ENCODE measurements at regions of chr7 and their contacts with region 1.

Region 1: GRCh38 chr7:157339777-157340677 is 3.2 kb downstream of the DNAJB6 start:
- DNase-seq: peak; percentile 53
- ATAC-seq: peak; percentile 59
- H3K4me3 ChIP-seq: peak overlapping the region in 1 of 2 experiments; percentile 2; a peak in 1 of 4 replicates
- H3K27ac ChIP-seq: peak overlapping the region; percentile 17
- H3K4me1 ChIP-seq: peaks cover 17 to 57% of the 10 kb centered on the region in 2 experiments
- H3K27me3 ChIP-seq: no peaks in the 10 kb centered on the region
- CTCF ChIP-seq: peak; percentile 84 to 97 (median 90)
- POLR2A ChIP-seq: no peak
- RAD21 ChIP-seq: peak; percentile 84

Region 2: DNA sequence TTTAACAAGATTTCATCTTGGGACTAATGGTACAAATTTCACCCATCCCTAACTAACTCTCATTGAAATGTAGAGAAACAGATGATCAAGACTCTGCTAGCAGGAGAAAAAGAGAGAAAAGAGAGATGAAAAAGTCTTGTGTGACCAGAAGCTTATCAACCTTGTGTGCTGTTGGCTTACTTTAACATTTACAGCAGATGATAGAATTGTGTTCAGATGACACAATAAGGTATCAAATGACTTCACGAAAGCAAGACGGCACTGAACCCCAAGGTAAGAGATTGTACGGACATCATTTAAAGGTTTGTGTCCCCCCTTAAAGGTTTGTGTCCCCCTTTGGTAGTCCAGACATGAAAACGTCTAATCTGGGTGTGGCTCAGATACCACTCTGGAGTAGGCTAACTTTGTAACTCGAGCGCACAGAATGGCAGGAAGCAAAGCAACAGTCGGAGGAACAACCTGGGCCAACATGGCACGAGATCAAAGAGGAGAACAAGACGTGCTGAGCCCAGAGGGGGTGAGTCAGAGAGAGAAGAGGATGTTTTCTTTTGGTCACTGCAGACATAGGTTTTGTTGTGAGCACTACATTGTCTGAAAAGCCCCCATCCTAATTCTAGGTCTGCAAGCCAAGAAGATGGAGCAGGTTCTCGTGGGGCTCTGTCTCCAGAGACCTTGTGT is 436.7 kb before region 1 on chr7:
- CTCF ChIA-PET with region 1: no interaction called
- POLR2A ChIA-PET with region 1: no interaction called
- RAD21 ChIA-PET with region 1: no interaction called
- intact Hi-C with region 1: loop called (anchors 10 kb)
- DNase-seq: peak; percentile 89
- ATAC-seq: peak; percentile 91
- H3K4me3 ChIP-seq: peak overlapping the region; percentile 8 to 45
- H3K27ac ChIP-seq: peak overlapping the region; percentile 54
- H3K4me1 ChIP-seq: peaks cover 30 to 61% of the 10 kb centered on the region in 2 experiments
- H3K27me3 ChIP-seq: no peaks in the 10 kb centered on the region
- CTCF ChIP-seq: no peak
- POLR2A ChIP-seq: no peak
- RAD21 ChIP-seq: no peak

Region 3: DNA sequence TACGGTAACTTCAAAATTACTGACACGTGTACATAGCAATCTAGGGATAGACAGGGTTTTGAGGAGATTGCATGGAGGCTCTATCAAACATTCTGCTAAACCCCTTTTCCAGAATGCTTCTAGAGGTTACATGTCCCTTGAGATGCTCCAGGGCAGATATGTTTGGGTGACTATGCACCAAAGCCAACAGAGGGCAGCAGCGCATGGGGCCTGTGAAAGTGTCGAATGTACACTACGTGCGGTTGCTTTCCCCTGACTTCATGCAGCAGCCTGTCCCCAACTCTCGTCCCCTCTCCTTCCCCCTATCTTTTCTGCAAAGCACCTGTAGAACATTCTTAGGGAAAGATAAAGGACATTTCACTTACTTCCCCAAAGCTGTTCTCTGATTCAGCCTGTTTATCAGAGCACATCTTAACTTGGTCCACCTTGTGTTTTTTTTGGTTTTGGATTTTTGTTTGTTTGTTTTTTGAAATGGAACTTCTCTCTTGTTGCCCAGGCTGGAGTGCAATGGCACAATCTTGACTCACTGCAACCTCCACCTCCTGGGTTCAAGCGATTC is 111.1 kb before region 1 on chr7:
- CTCF ChIA-PET with region 1: no interaction called
- POLR2A ChIA-PET with region 1: no interaction called
- RAD21 ChIA-PET with region 1: no interaction called
- intact Hi-C with region 1: loop called (anchors 1 kb)
- DNase-seq: no peak
- ATAC-seq: peak; percentile 89
- H3K4me3 ChIP-seq: no peak overlapping the region
- H3K27ac ChIP-seq: no peak overlapping the region
- H3K4me1 ChIP-seq: no peaks in the 10 kb centered on the region
- H3K27me3 ChIP-seq: no peaks in the 10 kb centered on the region
- CTCF ChIP-seq: peak; percentile 38 to 58 (median 55); a peak in 4 of 6 replicates
- POLR2A ChIP-seq: no peak
- RAD21 ChIP-seq: peak; percentile 54

Measured in HCT116 (cell line).